ENCODE measurements at regions of chr2 and their contacts with region 1.

Region 1: DNA sequence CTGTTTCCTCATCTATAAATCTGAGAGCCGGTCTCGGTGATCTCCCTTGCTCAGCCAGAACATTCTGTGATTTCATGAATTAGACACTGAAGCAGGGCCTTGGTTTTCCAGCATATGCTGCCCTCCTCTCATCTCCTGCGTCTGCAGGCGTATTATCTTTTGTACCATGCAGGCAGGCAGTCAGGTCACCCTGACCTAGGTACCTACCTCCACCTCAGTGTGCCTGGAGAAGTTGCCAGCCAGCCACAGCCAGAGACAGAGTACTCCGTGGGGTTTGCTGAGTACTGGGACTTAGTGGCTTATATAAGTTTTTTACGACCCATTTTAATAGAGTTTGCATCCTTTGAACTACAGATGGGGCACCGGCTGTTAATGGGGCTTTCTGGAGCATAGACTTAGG is 101.1 kb downstream of the PRKCE start:
- DNase-seq: no peak
- H3K4me3 ChIP-seq: no peak overlapping the region
- H3K27ac ChIP-seq: no peak overlapping the region
- H3K4me1 ChIP-seq: no peaks in the 10 kb centered on the region
- CTCF ChIP-seq: no peak

Region 2: GRCh38 chr2:45700407-45701041 is 52.0 kb before region 1 on chr2:
- CTCF ChIA-PET with region 1: interaction called, 18 read pairs
- POLR2A ChIA-PET with region 1: no interaction called
- intact Hi-C with region 1: no loop called
- DNase-seq: peak; percentile 42
- H3K4me3 ChIP-seq: no peak overlapping the region
- H3K27ac ChIP-seq: no peak overlapping the region
- H3K4me1 ChIP-seq: peaks cover 38% of the 10 kb centered on the region
- CTCF ChIP-seq: no peak